ENCODE measurements at regions of chr2 and their contacts with region 1.

Region 1: GRCh38 chr2:25103287-25103871 is 61.5 kb downstream of the EFR3B start:
- DNase-seq: peak; percentile 94
- ATAC-seq: peak; percentile 68
- H3K4me3 ChIP-seq: no peak overlapping the region
- H3K27ac ChIP-seq: peak overlapping the region; percentile 74
- H3K4me1 ChIP-seq: peaks cover 40% of the 10 kb centered on the region
- H3K27me3 ChIP-seq: no peaks in the 10 kb centered on the region
- CTCF ChIP-seq: no peak

Region 2: GRCh38 chr2:25063876-25064660 is 39.3 kb before region 1 on chr2:
- CTCF ChIA-PET with region 1: no interaction called
- POLR2A ChIA-PET with region 1: interaction called, 10 read pairs
- intact Hi-C with region 1: no loop called
- DNase-seq: peak; percentile 29
- ATAC-seq: peak; percentile 88
- H3K4me3 ChIP-seq: no peak overlapping the region
- H3K27ac ChIP-seq: no peak overlapping the region
- H3K4me1 ChIP-seq: peaks cover 9% of the 10 kb centered on the region
- H3K27me3 ChIP-seq: no peaks in the 10 kb centered on the region
- CTCF ChIP-seq: no peak

Region 3: GRCh38 chr2:25078171-25079049 is 25.0 kb before region 1 on chr2:
- CTCF ChIA-PET with region 1: interaction called, 12 read pairs
- POLR2A ChIA-PET with region 1: interaction called, 3 read pairs
- intact Hi-C with region 1: loop called (anchors 1 kb)
- DNase-seq: peak; percentile 93
- ATAC-seq: peak; percentile 95
- H3K4me3 ChIP-seq: peak overlapping the region; percentile 46
- H3K27ac ChIP-seq: peak overlapping the region; percentile 62
- H3K4me1 ChIP-seq: peaks cover 16% of the 10 kb centered on the region
- H3K27me3 ChIP-seq: no peaks in the 10 kb centered on the region
- CTCF ChIP-seq: no peak

Region 4: GRCh38 chr2:25190536-25190935 is 87.2 kb after region 1 on chr2:
- CTCF ChIA-PET with region 1: no interaction called
- POLR2A ChIA-PET with region 1: no interaction called
- intact Hi-C with region 1: no loop called
- DNase-seq: no peak
- ATAC-seq: no peak
- H3K4me3 ChIP-seq: no peak overlapping the region
- H3K27ac ChIP-seq: no peak overlapping the region
- H3K4me1 ChIP-seq: no peaks in the 10 kb centered on the region
- H3K27me3 ChIP-seq: no peaks in the 10 kb centered on the region
- CTCF ChIP-seq: no peak

Region 5: GRCh38 chr2:25286025-25286400 is 182.6 kb after region 1 on chr2:
- CTCF ChIA-PET with region 1: no interaction called
- POLR2A ChIA-PET with region 1: no interaction called
- intact Hi-C with region 1: no loop called
- DNase-seq: no peak
- ATAC-seq: no peak
- H3K4me3 ChIP-seq: no peak overlapping the region
- H3K27ac ChIP-seq: no peak overlapping the region
- H3K4me1 ChIP-seq: no peaks in the 10 kb centered on the region
- H3K27me3 ChIP-seq: no peaks in the 10 kb centered on the region
- CTCF ChIP-seq: no peak

Region 6: DNA sequence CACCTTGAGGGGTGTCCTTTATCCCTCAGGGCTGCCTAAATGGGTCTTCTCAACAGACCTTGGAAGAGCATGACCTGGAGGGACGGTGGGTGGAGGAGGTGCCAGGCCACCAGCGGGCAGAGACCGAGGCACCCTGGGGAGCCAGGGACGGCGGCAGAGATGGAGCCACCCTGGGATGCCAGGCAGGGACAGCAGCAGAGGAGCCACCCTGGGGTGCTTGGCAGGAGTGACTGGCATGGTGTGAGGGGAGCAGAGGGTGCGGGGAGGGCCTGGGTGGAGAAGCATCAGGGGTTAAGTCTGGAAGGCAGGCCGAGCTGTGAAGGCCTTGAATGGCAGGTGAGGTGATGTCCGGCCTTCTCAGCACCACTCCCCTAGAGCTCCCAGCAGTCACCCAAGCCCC is 1481.7 kb after region 1 on chr2:
- CTCF ChIA-PET with region 1: no interaction called
- POLR2A ChIA-PET with region 1: interaction called, 13 read pairs
- intact Hi-C with region 1: no loop called
- DNase-seq: no peak
- ATAC-seq: no peak
- H3K4me3 ChIP-seq: no peak overlapping the region
- H3K27ac ChIP-seq: no peak overlapping the region
- H3K4me1 ChIP-seq: no peaks in the 10 kb centered on the region
- H3K27me3 ChIP-seq: peaks cover 87% of the 10 kb centered on the region
- CTCF ChIP-seq: no peak

Measured in PC-3 (cell line).